WTC11 (cell line): ENCODE measurements at regions of chr18 and their contacts with region 1.

Region 1: DNA sequence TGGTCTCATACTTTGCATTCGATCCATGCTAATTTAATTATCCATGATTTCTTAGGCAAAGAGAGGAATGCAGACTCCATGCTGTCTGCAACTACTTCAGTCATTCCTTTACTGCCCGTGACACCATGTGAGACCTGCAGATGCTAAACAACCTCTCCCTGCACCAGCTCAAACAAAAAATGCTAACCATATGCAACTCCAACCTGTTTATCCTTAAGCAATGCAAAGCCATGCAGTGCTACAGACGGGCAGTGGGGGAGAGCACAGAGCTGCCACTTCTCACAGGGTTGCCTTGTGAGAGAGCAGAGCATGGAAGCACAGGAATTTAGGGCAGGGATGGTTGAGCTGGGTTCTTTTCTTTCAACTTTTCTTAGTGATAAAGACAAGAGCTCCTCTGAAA is 74.9 kb upstream of the KLHL14 start:
- DNase-seq: peak; percentile 50
- ATAC-seq: peak; percentile 100
- H3K4me3 Mint-ChIP-seq: peak overlapping the region; percentile 9; the same call in 1 of the 2 replicates
- H3K27ac Mint-ChIP-seq: peak overlapping the region; percentile 85
- H3K4me1 Mint-ChIP-seq: peaks cover 22% of the 10 kb centered on the region
- H3K27me3 Mint-ChIP-seq: no peaks in the 10 kb centered on the region
- CTCF ChIP-seq: no peak

Region 2: DNA sequence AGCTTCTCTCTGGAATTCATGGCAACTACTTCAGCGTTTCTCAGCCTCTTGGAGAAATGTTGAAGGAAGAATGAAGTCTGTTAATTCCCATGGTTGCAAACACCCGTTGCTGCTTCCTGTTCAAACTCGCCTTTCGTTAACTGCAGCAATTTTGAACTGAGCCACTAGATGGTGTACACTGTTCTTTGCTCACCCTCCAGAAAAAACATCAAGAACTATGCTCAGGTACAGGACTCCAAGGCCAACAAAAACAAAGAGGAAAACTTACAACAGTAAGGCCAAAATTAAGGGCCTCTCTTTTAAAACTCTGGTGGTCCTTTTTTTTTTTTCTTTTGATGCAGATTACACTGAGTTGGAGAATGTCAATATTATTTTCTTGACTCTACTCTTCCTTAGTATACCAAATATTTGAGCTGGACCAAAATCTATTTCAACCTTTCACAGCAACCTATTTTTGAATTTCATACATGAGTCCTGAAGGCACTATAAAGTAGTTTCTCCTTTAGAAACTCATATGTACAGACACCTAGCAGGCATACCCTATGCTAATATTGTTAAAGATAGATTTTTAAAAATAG is 133.0 kb before region 1 on chr18:
- CTCF ChIA-PET with region 1: interaction called, 17 read pairs
- POLR2A ChIA-PET with region 1: no interaction called
- DNase-seq: peak; percentile 37
- ATAC-seq: peak; percentile 97
- H3K4me3 Mint-ChIP-seq: no peak overlapping the region
- H3K27ac Mint-ChIP-seq: no peak overlapping the region
- H3K4me1 Mint-ChIP-seq: peaks cover 8% of the 10 kb centered on the region
- H3K27me3 Mint-ChIP-seq: no peaks in the 10 kb centered on the region
- CTCF ChIP-seq: peak; percentile 57